ENCODE measurements at regions of chr19 and their contacts with region 1.

Region 1: DNA sequence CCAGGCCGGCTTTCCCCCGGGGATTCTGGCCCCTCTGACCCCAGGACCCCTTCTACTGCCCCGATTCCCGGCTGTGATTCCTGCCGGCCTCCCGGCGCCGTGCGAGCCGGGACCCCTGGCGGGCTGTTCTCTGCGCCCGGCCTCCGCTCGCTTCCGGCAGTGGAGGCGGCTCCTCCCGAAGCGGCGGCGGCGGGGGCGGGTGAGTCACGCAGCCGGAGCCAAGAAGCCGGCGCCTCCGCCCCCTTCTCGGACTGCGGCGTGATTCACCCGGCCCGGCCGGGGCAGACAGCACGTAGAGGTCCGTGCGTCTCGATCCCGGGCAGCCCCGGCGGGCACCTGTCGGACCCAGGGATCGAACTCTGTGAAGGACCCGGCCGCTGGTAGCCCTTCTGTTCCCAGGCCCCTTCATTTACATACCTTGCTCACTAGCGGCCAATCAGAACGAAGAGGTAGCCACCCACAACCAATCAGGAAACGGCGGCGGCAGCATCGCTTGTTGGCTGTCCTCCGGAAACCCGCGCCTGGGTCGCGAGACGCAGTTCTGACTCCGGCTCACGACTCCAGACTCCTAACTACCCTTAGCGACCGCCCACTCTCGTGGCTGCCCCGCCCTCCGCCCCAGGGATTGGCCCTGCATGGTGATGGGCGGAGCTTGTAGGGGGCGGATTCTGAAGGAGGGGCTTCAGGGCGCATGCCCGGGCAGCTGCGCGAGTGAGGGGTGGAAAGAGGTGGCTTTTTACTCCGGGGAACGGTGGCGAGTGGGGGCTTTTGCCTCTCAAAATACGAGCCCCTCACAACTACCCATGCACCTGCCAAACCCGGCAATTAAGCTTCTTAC is at the start of gene SERTAD1:
- DNase-seq: peak; percentile 100
- ATAC-seq: peak; percentile 87
- H3K4me3 Mint-ChIP-seq: peak within 1 kb of the TSS; percentile 94
- H3K27ac Mint-ChIP-seq: peak within 1 kb of the TSS; percentile 96
- H3K4me1 Mint-ChIP-seq: peaks cover 20% of the 10 kb centered on the region
- H3K27me3 Mint-ChIP-seq: no peaks in the 10 kb centered on the region
- total RNA-seq, gene SERTAD1: 9.4 to 9.6 TPM

Region 2: GRCh38 chr19:40348125-40348913 is 77.3 kb before region 1 on chr19 and contains the starts of genes C19orf47 and PLD3:
- CTCF ChIA-PET with region 1: interaction called, 13 read pairs
- DNase-seq: peak; percentile 100
- ATAC-seq: peak; percentile 95
- H3K4me3 Mint-ChIP-seq: peak within 1 kb of the TSS; percentile 86
- H3K27ac Mint-ChIP-seq: peak within 1 kb of the TSS; percentile 86
- H3K4me1 Mint-ChIP-seq: peaks cover 30% of the 10 kb centered on the region
- H3K27me3 Mint-ChIP-seq: peaks cover 2% of the 10 kb centered on the region
- total RNA-seq, gene C19orf47: 25.9 to 32.4 TPM
- total RNA-seq, gene PLD3: 72.0 to 84.7 TPM

Region 3: DNA sequence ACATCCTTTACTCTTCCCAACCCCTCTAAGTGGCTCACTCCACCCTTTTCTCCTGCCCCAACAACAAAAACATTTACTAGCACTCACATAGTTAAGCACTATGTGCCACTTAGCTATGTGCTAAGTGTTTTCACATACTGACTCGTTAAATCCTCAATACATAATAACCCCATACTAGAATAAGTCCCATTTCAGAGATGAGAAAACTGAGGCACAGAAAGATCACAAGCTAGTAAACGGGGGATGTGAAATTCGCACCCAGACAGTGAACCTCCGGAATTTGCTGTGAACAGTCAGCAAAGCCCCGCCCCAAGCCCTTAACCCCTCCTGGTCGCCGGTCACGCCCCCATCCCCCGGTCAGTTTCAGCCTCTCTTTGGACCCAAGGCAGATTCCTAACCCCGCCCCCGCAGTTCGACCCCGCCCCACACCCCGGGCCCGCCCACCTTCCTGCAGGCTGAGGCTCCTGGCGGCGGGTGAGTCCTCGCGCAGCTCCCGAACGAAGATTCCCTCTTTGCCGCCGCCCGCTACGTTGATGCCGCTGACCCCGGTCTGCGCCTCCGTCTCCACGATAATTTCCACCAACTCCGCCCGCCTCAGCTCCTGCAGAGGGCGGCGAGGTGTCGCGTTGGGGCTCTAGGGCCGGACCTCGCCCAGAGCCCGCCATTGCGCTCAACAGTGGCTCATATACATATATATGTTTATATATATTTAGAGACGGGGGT is 22.2 kb before region 1 on chr19:
- CTCF ChIA-PET with region 1: interaction called, 22 read pairs
- DNase-seq: peak; percentile 93
- ATAC-seq: peak; percentile 81
- H3K4me3 Mint-ChIP-seq: peak overlapping the region; percentile 83
- H3K27ac Mint-ChIP-seq: peak overlapping the region; percentile 69
- H3K4me1 Mint-ChIP-seq: peaks cover 16% of the 10 kb centered on the region
- H3K27me3 Mint-ChIP-seq: peaks cover 4% of the 10 kb centered on the region

Region 4: GRCh38 chr19:40444192-40445028 is 18.7 kb after region 1 on chr19 and contains the start of gene SERTAD3:
- CTCF ChIA-PET with region 1: interaction called, 15 read pairs
- DNase-seq: peak; percentile 98
- ATAC-seq: peak; percentile 80
- H3K4me3 Mint-ChIP-seq: peak within 1 kb of the TSS; percentile 95
- H3K27ac Mint-ChIP-seq: peak within 1 kb of the TSS; percentile 97
- H3K4me1 Mint-ChIP-seq: peaks cover 21% of the 10 kb centered on the region
- H3K27me3 Mint-ChIP-seq: no peaks in the 10 kb centered on the region
- total RNA-seq, gene SERTAD3: 13.4 to 13.7 TPM

Region 5: GRCh38 chr19:40502647-40503319 is 77.1 kb after region 1 on chr19:
- CTCF ChIA-PET with region 1: no interaction called
- DNase-seq: no peak
- ATAC-seq: no peak
- H3K4me3 Mint-ChIP-seq: no peak overlapping the region
- H3K27ac Mint-ChIP-seq: no peak overlapping the region
- H3K4me1 Mint-ChIP-seq: no peaks in the 10 kb centered on the region
- H3K27me3 Mint-ChIP-seq: peaks cover 6% of the 10 kb centered on the region

Measured in activated CD8-positive, alpha-beta memory T cell treated with anti-CD3 and anti-CD28 coated beads, Interleukin-2, amount 10 ng/mL, durations not matched to agents 7 days and 5 days (primary cell).